ENCODE measurements at regions of chr1 and their contacts with region 1.

Region 1: DNA sequence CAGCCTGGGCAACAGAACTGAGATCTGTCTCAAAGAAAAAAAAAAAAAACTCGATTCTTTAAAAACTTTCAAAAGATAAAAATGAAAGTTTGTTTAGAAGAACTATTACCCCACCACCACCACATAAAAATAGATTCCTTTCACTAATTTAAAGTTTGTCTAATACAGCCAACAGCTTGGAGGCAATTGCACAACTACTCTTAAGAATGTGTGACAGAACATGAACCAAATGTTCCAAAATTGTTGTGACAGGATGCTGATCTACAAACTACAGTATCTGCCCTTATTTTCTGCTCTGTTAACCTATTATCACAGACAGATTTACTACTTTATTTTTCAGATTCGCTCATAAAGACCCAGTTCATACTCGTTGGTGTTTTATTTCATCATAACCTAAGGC is 5.5 kb upstream of the TGFBR3 start:
- DNase-seq: no peak
- ATAC-seq: no peak
- H3K4me3 ChIP-seq: no peak overlapping the region
- H3K27ac ChIP-seq: no peak overlapping the region
- H3K4me1 ChIP-seq: peaks cover 12% of the 10 kb centered on the region
- H3K27me3 ChIP-seq: no peaks in the 10 kb centered on the region
- CTCF ChIP-seq: no peak

Region 2: DNA sequence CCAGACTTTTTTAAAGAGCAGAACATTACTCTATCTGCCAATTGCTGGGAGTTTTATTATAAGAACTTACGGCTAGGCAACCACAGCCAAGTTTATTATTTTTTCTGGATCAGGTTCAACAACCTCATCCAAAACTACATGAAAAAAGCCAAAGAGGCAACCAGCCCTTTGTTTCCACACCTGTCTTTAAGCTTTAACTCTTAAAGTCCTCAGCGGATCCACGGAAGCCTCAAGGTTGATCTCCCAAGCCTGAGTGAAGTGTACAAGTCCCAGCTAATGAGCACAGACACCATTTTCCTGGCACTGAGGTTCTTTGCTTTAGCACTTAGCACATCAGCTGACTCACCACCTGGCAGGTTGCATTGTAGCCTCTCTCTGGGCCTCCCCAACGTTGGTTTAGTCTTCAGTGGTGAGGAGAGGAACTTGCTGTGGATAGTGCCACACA is 148.6 kb before region 1 on chr1:
- CTCF ChIA-PET with region 1: no interaction called
- POLR2A ChIA-PET with region 1: no interaction called
- intact Hi-C with region 1: no loop called
- DNase-seq: peak; percentile 39
- ATAC-seq: peak; percentile 66
- H3K4me3 ChIP-seq: no peak overlapping the region
- H3K27ac ChIP-seq: no peak overlapping the region
- H3K4me1 ChIP-seq: peaks cover 10% of the 10 kb centered on the region; the same call in 1 of the 2 replicates
- H3K27me3 ChIP-seq: no peaks in the 10 kb centered on the region
- CTCF ChIP-seq: no peak

Region 3: DNA sequence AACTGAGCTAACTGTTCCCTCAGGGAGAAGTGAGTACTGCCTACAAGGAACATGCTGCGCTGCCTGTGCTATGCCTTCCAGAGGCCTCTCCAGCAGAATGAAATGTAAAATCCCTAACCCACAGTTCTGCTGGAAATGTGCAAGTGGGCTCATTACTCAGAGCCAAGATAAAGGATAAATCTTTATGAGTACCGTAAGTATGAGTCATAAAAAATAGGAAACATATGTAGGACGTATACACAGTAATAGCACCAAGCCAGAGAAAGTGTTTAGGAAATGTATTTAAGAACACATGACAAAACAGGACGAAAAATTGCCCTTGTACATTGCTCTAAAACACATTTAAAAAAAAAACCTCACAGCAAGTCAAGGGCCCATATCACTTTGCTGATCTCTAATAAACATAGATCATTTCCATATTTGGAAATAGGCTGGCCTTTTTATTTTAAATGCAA is 110.1 kb before region 1 on chr1:
- CTCF ChIA-PET with region 1: no interaction called
- POLR2A ChIA-PET with region 1: no interaction called
- intact Hi-C with region 1: no loop called
- DNase-seq: peak; percentile 75
- ATAC-seq: peak; percentile 81
- H3K4me3 ChIP-seq: no peak overlapping the region
- H3K27ac ChIP-seq: no peak overlapping the region
- H3K4me1 ChIP-seq: peaks cover 13% of the 10 kb centered on the region
- H3K27me3 ChIP-seq: no peaks in the 10 kb centered on the region
- CTCF ChIP-seq: no peak

Region 4: GRCh38 chr1:91876040-91876470 is 15.4 kb before region 1 on chr1:
- CTCF ChIA-PET with region 1: no interaction called
- POLR2A ChIA-PET with region 1: no interaction called
- intact Hi-C with region 1: no loop called
- DNase-seq: no peak
- ATAC-seq: no peak
- H3K4me3 ChIP-seq: no peak overlapping the region
- H3K27ac ChIP-seq: no peak overlapping the region
- H3K4me1 ChIP-seq: peaks cover 33% of the 10 kb centered on the region
- H3K27me3 ChIP-seq: no peaks in the 10 kb centered on the region
- CTCF ChIP-seq: no peak

Region 5: GRCh38 chr1:93235271-93235670 is 1343.8 kb after region 1 on chr1:
- CTCF ChIA-PET with region 1: no interaction called
- POLR2A ChIA-PET with region 1: interaction called, 11 read pairs
- intact Hi-C with region 1: no loop called
- DNase-seq: no peak
- ATAC-seq: no peak
- H3K4me3 ChIP-seq: no peak overlapping the region
- H3K27ac ChIP-seq: no peak overlapping the region
- H3K4me1 ChIP-seq: no peaks in the 10 kb centered on the region
- H3K27me3 ChIP-seq: no peaks in the 10 kb centered on the region
- CTCF ChIP-seq: no peak